ENCODE measurements at regions of chr4 and their contacts with region 1.

Region 1: DNA sequence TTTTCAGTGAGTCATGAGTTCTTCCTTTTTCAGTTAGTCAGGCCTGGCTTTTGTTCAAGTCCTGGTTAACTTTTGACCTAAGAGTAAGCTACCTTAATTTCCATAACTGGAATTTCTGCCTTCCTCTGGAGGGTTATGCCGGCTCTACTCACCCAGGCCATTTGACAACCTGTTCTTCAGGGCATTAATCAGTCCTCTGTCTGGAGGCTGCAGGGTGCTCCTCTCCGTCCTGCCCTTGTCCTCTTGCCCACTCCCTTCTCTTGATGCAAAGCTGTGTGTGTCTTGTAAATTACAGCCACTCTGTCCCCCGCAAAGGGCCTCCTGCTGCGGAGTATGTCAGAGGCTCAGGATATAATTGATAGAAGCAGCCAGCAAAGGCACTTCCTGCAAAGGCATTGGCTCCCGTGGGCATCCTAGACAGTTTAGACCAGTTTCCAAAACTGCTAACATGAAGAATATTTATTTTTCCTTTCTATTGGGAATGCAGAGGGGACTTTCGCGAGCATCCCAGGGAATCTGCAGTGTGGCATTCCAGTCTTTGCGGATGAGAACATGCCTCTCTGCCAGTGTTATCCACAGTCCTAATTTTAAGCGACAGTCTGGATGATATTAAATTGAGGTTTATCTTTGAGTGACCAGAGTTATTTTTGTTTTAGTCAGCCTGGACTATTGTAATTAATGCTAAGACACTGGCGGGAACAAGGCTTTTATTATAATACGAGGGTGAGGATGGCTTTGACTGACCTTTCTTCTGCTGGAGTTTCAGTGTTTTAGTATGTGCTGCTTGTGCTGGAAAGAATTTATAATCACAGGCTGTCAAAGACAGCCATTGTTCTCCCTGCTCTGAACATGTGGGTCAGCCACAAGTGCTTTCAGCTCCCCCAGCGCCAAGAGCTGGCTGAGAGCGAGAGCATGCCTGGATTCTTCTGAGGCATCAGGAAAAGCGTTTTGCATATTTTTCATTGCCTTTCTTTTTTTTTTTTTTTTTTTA is 74.2 kb downstream of the LIMCH1 start:
- DNase-seq: peak; percentile 92
- ATAC-seq: peak; percentile 87
- H3K4me3 ChIP-seq: peak overlapping the region; percentile 36; the same call in 1 of the 2 replicates
- H3K27ac ChIP-seq: peak overlapping the region; percentile 79
- H3K4me1 ChIP-seq: peaks cover 27% of the 10 kb centered on the region
- H3K27me3 ChIP-seq: no peaks in the 10 kb centered on the region
- CTCF ChIP-seq: no peak

Region 2: GRCh38 chr4:41204400-41204978 is 407.7 kb before region 1 on chr4:
- CTCF ChIA-PET with region 1: no interaction called
- POLR2A ChIA-PET with region 1: no interaction called
- intact Hi-C with region 1: no loop called
- DNase-seq: peak; percentile 68
- ATAC-seq: peak; percentile 64
- H3K4me3 ChIP-seq: no peak overlapping the region
- H3K27ac ChIP-seq: no peak overlapping the region
- H3K4me1 ChIP-seq: peaks cover 16% of the 10 kb centered on the region
- H3K27me3 ChIP-seq: no peaks in the 10 kb centered on the region
- CTCF ChIP-seq: no peak

Region 3: GRCh38 chr4:41590591-41590990 is 21.6 kb before region 1 on chr4:
- CTCF ChIA-PET with region 1: no interaction called
- POLR2A ChIA-PET with region 1: no interaction called
- intact Hi-C with region 1: no loop called
- DNase-seq: peak; percentile 46
- ATAC-seq: no peak
- H3K4me3 ChIP-seq: no peak overlapping the region
- H3K27ac ChIP-seq: no peak overlapping the region
- H3K4me1 ChIP-seq: peaks cover 9% of the 10 kb centered on the region; the same call in 1 of the 2 replicates
- H3K27me3 ChIP-seq: no peaks in the 10 kb centered on the region
- CTCF ChIP-seq: no peak

Region 4: GRCh38 chr4:41661442-41662076 is 49.4 kb after region 1 on chr4:
- CTCF ChIA-PET with region 1: no interaction called
- POLR2A ChIA-PET with region 1: no interaction called
- intact Hi-C with region 1: loop called (anchors 5 kb)
- DNase-seq: peak; percentile 67
- ATAC-seq: peak; percentile 53; the same call in 1 of the 2 replicates
- H3K4me3 ChIP-seq: no peak overlapping the region
- H3K27ac ChIP-seq: no peak overlapping the region
- H3K4me1 ChIP-seq: peaks cover 19% of the 10 kb centered on the region
- H3K27me3 ChIP-seq: no peaks in the 10 kb centered on the region
- CTCF ChIP-seq: peak; percentile 83

Region 5: DNA sequence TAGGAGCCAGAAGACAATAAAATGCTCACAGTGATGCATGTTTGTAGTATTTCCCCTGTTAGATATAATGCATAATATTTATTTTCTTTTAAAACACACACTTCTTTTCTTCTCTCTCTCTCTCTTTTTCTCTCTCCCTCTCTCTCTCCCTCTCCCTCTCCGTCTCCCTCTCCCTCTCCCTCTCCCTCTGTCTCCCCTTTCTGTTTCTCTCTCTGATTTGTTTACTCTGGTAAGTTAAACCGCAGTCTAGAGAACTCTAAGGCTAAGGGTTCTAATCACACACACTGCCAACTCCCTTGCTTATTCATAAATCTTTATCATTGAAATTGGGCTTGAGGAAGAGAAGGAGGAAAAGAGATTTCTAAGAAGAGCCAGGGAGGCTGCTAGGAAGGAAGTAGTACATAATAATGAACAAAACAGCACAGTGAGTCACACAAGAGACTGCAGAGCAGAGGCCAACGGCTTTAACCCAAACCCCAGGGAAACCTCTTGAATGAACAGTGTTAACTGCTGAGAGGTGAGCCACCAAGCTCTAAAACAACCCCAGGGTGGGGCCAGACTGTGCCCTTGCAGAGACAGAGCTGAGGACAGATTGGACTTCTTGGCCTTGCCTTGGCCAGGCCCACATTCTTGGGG is 145.5 kb after region 1 on chr4:
- CTCF ChIA-PET with region 1: no interaction called
- POLR2A ChIA-PET with region 1: no interaction called
- intact Hi-C with region 1: no loop called
- DNase-seq: peak; percentile 35
- ATAC-seq: peak; percentile 42; the same call in 1 of the 2 replicates
- H3K4me3 ChIP-seq: no peak overlapping the region
- H3K27ac ChIP-seq: no peak overlapping the region
- H3K4me1 ChIP-seq: peaks cover 4% of the 10 kb centered on the region; the same call in 1 of the 2 replicates
- H3K27me3 ChIP-seq: peaks cover 51% of the 10 kb centered on the region
- CTCF ChIP-seq: no peak

Region 6: GRCh38 chr4:42656944-42657792 is 1045.0 kb after region 1 on chr4 and contains the start of gene ATP8A1:
- CTCF ChIA-PET with region 1: no interaction called
- POLR2A ChIA-PET with region 1: no interaction called
- intact Hi-C with region 1: no loop called
- DNase-seq: peak; percentile 84
- ATAC-seq: peak; percentile 63
- H3K4me3 ChIP-seq: peak within 1 kb of the TSS; percentile 84
- H3K27ac ChIP-seq: peak within 1 kb of the TSS; percentile 82
- H3K4me1 ChIP-seq: peaks cover 39% of the 10 kb centered on the region
- H3K27me3 ChIP-seq: no peaks in the 10 kb centered on the region
- CTCF ChIP-seq: no peak
- total RNA-seq, gene ATP8A1: 3.9 and 5.3 TPM in 2 replicates